GM13977 (cell line): ENCODE measurements at regions of chr15 and their contacts with region 1.

Region 1: DNA sequence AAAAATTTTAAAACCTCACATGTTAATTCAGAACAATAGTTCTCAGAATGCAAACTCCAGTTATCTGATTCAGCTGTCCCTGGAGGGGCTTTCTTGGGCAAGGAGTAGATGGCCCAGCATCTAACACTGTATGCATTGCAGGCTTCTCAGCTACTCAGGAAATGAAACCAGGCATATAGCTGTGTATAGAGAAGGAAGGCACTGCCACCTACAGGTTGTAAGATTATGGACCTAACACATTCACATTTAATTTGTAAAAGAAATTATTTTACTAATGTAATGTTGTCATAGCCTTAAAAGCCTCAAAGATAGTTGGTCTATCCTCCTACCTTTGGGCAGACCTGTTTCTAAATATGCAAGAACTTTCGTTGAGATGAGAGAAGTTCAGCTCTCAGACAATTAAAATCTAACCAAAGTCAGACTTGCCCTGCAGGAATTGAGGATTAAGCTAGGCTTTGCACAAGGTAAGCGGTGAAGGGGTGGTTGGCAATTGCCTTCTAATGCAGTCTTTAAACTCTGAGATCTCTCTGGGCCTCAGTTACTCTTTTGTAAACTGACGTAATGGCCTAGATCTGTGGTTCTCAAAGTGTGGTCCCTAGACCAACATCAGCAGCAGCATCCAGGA is 132.8 kb upstream of the SLC24A5 start:
- DNase-seq: peak; percentile 42
- CTCF ChIP-seq: peak; percentile 64

Region 2: DNA sequence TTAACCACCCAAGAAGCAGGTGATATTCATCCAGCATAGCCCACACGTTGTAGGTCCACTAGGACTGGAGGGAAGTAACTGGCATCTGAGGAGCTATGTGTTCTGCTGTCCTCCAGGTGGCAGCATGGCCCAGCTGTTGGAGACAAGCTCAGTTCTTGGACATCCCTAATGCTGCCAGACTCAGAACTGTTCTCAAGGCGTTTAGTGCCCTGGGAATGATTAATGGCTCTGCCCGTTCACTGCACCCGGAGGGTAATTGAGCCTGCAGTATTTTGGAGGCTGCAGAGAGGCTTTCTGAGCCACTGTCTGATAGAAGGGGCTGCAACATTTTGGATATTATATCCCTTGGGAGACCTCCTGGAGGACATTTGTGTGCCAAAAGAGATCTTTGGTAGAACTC is 792.0 kb before region 1 on chr15:
- in situ Hi-C with region 1: loop called (anchors 25 kb)
- DNase-seq: peak; percentile 38
- CTCF ChIP-seq: peak; percentile 82

Region 3: DNA sequence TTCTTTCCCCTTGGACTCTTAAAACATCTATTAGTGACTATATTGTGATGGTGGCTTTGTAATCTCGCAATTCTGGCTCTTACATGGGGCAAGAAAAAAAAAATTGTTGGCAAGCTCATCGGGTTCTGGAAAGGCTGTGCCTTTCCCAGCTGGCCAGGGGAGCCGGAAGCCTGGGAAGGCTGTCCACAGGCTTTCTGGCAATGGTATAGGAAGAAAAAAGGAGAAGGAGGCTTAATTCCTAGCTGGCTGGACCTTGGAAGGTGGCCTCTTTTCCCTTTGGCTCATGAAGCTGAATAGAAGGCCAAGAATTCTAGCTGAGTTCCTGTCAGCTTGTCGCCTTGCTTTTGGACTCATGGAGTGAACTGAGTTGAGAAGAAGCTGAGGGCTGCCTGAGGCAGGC is 514.2 kb before region 1 on chr15:
- in situ Hi-C with region 1: loop called (anchors 25 kb)
- DNase-seq: no peak
- CTCF ChIP-seq: no peak

Region 4: GRCh38 chr15:47717036-47717611 is 270.9 kb before region 1 on chr15 and contains the start of gene SEMA6D:
- in situ Hi-C with region 1: loop called (anchors 25 kb)
- DNase-seq: peak; percentile 44
- CTCF ChIP-seq: no peak

Region 5: DNA sequence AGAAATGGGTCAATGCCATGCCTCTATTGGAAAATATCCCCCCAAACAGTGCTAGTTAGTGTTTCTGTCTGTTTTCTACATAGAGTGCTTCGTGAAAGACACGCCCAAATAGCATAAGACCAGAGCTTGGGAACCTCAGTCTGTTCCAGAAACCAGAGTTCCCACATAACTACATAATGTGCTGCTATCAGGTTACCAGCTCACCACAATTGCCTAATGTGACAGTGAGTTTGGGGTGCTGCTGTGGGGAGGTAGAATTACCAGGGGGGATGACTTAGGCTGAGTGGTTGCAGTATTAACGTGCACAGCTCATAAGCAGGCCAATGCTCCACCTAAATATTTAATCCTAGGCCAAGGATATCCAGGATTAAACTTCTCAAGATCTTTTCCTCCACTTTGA is 382.4 kb after region 1 on chr15:
- in situ Hi-C with region 1: no loop called
- DNase-seq: no peak
- CTCF ChIP-seq: no peak